Left colon (tissue), 2 donors: ENCODE measurements at regions of chr9 and their contacts with region 1.

Region 1: GRCh38 chr9:89437000-89437631 is 60.8 kb downstream of the SEMA4D start:
- DNase-seq: peak; percentile 74 to 83
- ATAC-seq: peak; percentile 71

Region 2: DNA sequence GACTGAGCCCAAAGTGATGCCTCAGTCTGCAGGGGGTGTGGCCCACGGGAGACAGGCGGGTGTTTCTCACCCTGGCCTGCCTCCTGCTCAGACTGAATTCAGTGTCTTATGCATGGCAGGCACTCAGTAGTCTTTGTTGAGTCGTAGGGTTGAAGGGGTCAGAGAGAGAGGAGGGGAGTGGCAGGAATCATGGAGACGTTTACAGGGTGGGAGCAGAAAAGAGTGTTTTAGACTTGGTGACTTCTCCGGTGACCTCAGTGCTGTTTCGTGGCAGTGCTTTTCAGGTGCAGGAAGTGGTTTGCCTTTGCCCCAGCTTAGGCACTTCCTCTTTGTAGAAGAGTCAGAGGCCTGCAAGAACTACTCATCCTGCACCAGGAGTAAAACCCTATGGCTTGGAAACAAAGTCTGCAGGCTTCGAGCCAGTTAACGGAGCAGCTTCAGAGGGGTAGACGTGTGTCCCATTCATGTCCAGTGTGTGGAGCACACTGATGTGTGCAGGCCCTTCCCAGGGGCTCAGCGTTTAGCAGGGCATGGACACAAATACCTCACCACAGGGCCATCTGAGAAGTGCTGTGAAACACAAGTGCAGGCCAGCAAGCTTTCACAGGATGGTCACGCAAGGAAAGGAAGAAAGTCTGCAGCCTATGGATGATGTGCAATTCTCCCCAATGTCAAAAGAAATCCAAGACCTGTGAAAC is 85.3 kb after region 1 on chr9:
- intact Hi-C with region 1: loop called in 1 of 2 experiments (anchors 10 kb)
- DNase-seq: peak; percentile 42 to 68
- ATAC-seq: peak; percentile 61